IMR-90 (cell line): ENCODE measurements at regions of chr13 and their contacts with region 1.

Region 1: DNA sequence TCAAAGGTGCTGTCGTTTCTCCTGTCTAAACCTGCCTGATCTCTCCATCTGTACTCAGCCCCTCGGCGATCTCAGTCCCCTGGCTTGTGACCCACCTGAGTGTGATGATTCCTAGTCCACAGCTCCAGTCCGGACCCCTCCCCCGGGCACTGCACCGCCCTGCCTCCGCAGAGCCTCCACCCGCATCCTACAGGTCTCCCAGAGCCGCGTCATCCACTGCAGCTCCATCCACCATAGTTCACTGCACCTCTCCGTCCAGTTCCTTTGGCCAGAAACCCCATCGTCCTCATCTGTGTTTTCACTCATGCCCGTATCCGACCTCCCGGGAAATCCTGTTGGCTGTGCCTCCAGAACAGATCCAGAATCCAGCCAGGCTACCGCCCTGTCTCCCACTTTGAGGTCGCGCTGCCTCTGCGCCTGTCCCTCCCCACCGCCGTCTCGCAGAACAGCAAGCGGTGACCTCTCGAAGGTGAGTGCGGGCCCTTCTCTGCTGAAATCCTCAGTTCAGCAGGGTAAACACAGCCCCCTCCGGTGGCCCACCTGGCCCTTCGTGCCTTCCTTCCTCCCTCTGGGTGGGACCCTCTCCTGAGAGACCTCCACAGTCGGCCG is 51.9 kb upstream of the MCF2L start:
- DNase-seq: no peak
- ATAC-seq: no peak
- H3K4me3 ChIP-seq: no peak overlapping the region
- H3K27ac ChIP-seq: no peak overlapping the region
- H3K4me1 ChIP-seq: no peaks in the 10 kb centered on the region
- H3K27me3 ChIP-seq: peaks cover 50% of the 10 kb centered on the region
- CTCF ChIP-seq: no peak
- POLR2A ChIP-seq: no peak
- RAD21 ChIP-seq: no peak

Region 2: GRCh38 chr13:112669881-112670499 is 247.2 kb before region 1 on chr13:
- CTCF ChIA-PET with region 1: no interaction called
- POLR2A ChIA-PET with region 1: interaction called, 14 read pairs
- dilution Hi-C with region 1: no loop called
- in situ Hi-C with region 1: no loop called
- intact Hi-C with region 1: no loop called
- DNase-seq: no peak
- ATAC-seq: no peak
- H3K4me3 ChIP-seq: no peak overlapping the region
- H3K27ac ChIP-seq: no peak overlapping the region
- H3K4me1 ChIP-seq: no peaks in the 10 kb centered on the region
- H3K27me3 ChIP-seq: peaks cover 35% of the 10 kb centered on the region
- CTCF ChIP-seq: no peak
- POLR2A ChIP-seq: no peak
- RAD21 ChIP-seq: no peak

Region 3: GRCh38 chr13:113087923-113088690 is 170.9 kb after region 1 on chr13:
- CTCF ChIA-PET with region 1: no interaction called
- POLR2A ChIA-PET with region 1: interaction called, 18 read pairs
- dilution Hi-C with region 1: no loop called
- in situ Hi-C with region 1: no loop called
- intact Hi-C with region 1: no loop called
- DNase-seq: no peak
- ATAC-seq: no peak
- H3K4me3 ChIP-seq: no peak overlapping the region
- H3K27ac ChIP-seq: no peak overlapping the region
- H3K4me1 ChIP-seq: no peaks in the 10 kb centered on the region
- H3K27me3 ChIP-seq: peaks cover 53% of the 10 kb centered on the region
- CTCF ChIP-seq: no peak
- POLR2A ChIP-seq: no peak
- RAD21 ChIP-seq: no peak